Heart left ventricle (tissue), 16 donors: ENCODE measurements at regions of chr1 and their contacts with region 1.

Region 1: GRCh38 chr1:11907275-11908094 is 18.7 kb downstream of the KIAA2013 start:
- DNase-seq: peak; percentile 90 to 94 (median 91)
- ATAC-seq: peak; percentile 82 to 91 (median 88)
- H3K4me3 ChIP-seq: peak overlapping the region in 10 of 12 donors; percentile 59 to 76 (median 66)
- H3K27ac ChIP-seq: peak overlapping the region; percentile 91 to 99 (median 97)
- H3K4me1 ChIP-seq: peaks cover 0 to 17% (median 0%) of the 10 kb centered on the region in 12 donors
- H3K27me3 ChIP-seq: no peaks in the 10 kb centered on the region
- CTCF ChIP-seq: peak; percentile 51 to 99 (median 76)
- POLR2A ChIP-seq: no peak

Region 2: GRCh38 chr1:11838349-11839272 is 68.9 kb before region 1 on chr1:
- intact Hi-C with region 1: loop called in 2 of 10 experiments (anchors 2 to 5 kb)
- DNase-seq: peak; percentile 67 to 89 (median 76)
- ATAC-seq: peak; percentile 46 to 80 (median 72)
- H3K4me3 ChIP-seq: no peak overlapping the region
- H3K27ac ChIP-seq: peak overlapping the region in 2 of 12 donors; percentile 57 to 68
- H3K4me1 ChIP-seq: peaks cover 0 to 37% (median 17%) of the 10 kb centered on the region in 12 donors
- H3K27me3 ChIP-seq: no peaks in the 10 kb centered on the region
- CTCF ChIP-seq: peak; percentile 95 to 100 (median 98)
- POLR2A ChIP-seq: no peak

Region 3: GRCh38 chr1:11934302-11935056 is 27.0 kb after region 1 on chr1 and contains the start of gene PLOD1:
- intact Hi-C with region 1: loop called in 2 of 10 experiments (anchors 2 kb)
- DNase-seq: peak; percentile 91 to 96 (median 91)
- ATAC-seq: peak; percentile 71 to 95 (median 88)
- H3K4me3 ChIP-seq: peak within 1 kb of the TSS; percentile 27 to 92 (median 68)
- H3K27ac ChIP-seq: peak within 1 kb of the TSS; percentile 77 to 94 (median 88)
- H3K4me1 ChIP-seq: peaks cover 6 to 75% (median 58%) of the 10 kb centered on the region in 12 donors
- H3K27me3 ChIP-seq: no peaks in the 10 kb centered on the region
- CTCF ChIP-seq: no peak
- POLR2A ChIP-seq: peak; percentile 20 to 88
- total RNA-seq, gene PLOD1: 37.5 to 104 (median 50.1) TPM

Region 4: GRCh38 chr1:11967028-11967547 is 59.6 kb after region 1 on chr1:
- intact Hi-C with region 1: loop called in 3 of 10 experiments (anchors 5 to 10 kb)
- DNase-seq: no peak
- ATAC-seq: peak; percentile 27 to 80 (median 69)
- H3K4me3 ChIP-seq: no peak overlapping the region
- H3K27ac ChIP-seq: no peak overlapping the region
- H3K4me1 ChIP-seq: no peaks in the 10 kb centered on the region
- H3K27me3 ChIP-seq: no peaks in the 10 kb centered on the region
- CTCF ChIP-seq: peak in 11 of 12 donors; percentile 28 to 64 (median 47)
- POLR2A ChIP-seq: no peak

Region 5: DNA sequence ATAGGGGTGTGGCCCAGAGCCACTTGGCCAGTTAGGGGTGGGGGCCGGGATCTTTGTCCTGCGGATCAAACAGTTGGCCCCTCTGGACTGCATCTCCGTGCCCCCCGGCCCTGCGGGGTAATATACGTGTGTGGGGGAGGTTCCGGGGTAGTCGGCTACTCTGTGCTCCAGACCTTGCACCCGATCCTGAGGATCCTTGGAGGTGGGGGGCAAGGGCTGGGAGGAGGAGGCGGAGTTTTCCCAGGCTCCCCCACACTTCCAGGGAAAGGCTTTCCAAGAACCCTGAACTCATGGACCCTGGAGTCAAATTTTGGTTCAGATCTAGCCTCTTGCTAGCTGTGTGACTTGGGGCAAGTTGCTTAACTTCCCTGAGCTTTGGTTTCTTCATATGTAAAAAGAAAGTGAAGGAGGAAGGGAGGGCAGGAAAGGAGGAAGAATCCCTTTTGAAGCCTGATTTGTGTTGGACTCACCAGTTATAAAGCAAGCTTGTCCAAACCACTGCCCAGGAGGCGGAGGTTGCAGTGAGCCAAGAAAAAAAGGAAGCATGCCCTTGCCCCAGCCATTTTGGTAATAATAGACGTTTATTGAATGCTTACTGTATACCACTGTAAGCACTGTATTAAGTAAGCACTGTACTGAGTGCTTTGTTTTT is 112.5 kb after region 1 on chr1:
- intact Hi-C with region 1: loop called in 1 of 10 experiments (anchors 1 kb)
- DNase-seq: peak in 1 of 5 donors; percentile 52
- ATAC-seq: peak in 2 of 4 donors; percentile 0 to 8
- H3K4me3 ChIP-seq: peak overlapping the region; percentile 74 to 98 (median 92)
- H3K27ac ChIP-seq: peak overlapping the region in 11 of 12 donors; percentile 67 to 88 (median 81)
- H3K4me1 ChIP-seq: peaks cover 0 to 12% (median 8%) of the 10 kb centered on the region in 12 donors
- H3K27me3 ChIP-seq: no peaks in the 10 kb centered on the region
- CTCF ChIP-seq: no peak
- POLR2A ChIP-seq: no peak

Region 6: GRCh38 chr1:12031039-12031980 is 123.8 kb after region 1 on chr1:
- intact Hi-C with region 1: loop called in 1 of 10 experiments (anchors 5 kb)
- DNase-seq: peak in 3 of 5 donors; percentile 37 to 68 (median 48)
- ATAC-seq: peak; percentile 57 to 82 (median 72)
- H3K4me3 ChIP-seq: no peak overlapping the region
- H3K27ac ChIP-seq: no peak overlapping the region
- H3K4me1 ChIP-seq: peaks cover 0 to 6% (median 0%) of the 10 kb centered on the region in 12 donors
- H3K27me3 ChIP-seq: no peaks in the 10 kb centered on the region
- CTCF ChIP-seq: peak; percentile 39 to 65 (median 55)
- POLR2A ChIP-seq: no peak